Endothelial cell of umbilical vein (primary cell): ENCODE measurements at regions of chr21 and their contacts with region 1.

Region 1: GRCh38 chr21:16419188-16419921 is 689.6 kb downstream of the USP25 start:
- DNase-seq: peak; percentile 99
- H3K4me3 ChIP-seq: peak overlapping the region; percentile 34 to 100 (median 57)
- H3K27ac ChIP-seq: peak overlapping the region; percentile 85
- H3K4me1 ChIP-seq: peaks cover 26% of the 10 kb centered on the region
- H3K27me3 ChIP-seq: no peaks in the 10 kb centered on the region
- CTCF ChIP-seq: no peak
- POLR2A ChIP-seq: peak; percentile 76

Region 2: GRCh38 chr21:15735409-15735808 is 683.9 kb before region 1 on chr21:
- CTCF ChIA-PET with region 1: no interaction called
- POLR2A ChIA-PET with region 1: no interaction called
- dilution Hi-C with region 1: no loop called
- intact Hi-C with region 1: loop called (anchors 2 kb)
- DNase-seq: peak; percentile 60
- H3K4me3 ChIP-seq: peak overlapping the region in 1 of 3 experiments; percentile 32
- H3K27ac ChIP-seq: peak overlapping the region; percentile 42
- H3K4me1 ChIP-seq: peaks cover 54% of the 10 kb centered on the region
- H3K27me3 ChIP-seq: no peaks in the 10 kb centered on the region
- CTCF ChIP-seq: no peak
- POLR2A ChIP-seq: no peak

Region 3: DNA sequence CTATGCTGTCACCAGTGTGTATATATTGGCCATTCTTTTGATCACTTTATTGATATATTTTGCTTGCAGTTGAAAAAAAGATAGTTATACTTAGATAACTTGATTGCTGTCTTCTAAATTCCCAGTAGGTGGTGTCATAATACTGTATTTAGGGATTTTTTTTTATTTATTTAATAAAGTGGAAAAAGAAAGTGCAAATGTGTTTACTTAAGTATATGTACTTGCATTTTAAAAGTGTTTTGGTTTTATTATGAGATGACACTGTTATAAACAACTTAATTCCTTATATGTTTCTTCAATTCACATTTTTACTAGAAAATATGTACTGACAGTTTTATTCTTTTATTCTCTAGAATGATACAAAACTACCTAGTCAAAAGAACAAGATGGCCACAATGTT is 524.8 kb before region 1 on chr21:
- CTCF ChIA-PET with region 1: no interaction called
- POLR2A ChIA-PET with region 1: no interaction called
- dilution Hi-C with region 1: no loop called
- intact Hi-C with region 1: loop called (anchors 10 kb)
- DNase-seq: peak; percentile 36
- H3K4me3 ChIP-seq: no peak overlapping the region
- H3K27ac ChIP-seq: no peak overlapping the region
- H3K4me1 ChIP-seq: no peaks in the 10 kb centered on the region
- H3K27me3 ChIP-seq: no peaks in the 10 kb centered on the region
- CTCF ChIP-seq: peak in 1 of 2 donors; percentile 13
- POLR2A ChIP-seq: no peak

Region 4: GRCh38 chr21:16194095-16194787 is 225.1 kb before region 1 on chr21:
- CTCF ChIA-PET with region 1: interaction called, 6 read pairs
- POLR2A ChIA-PET with region 1: no interaction called
- dilution Hi-C with region 1: no loop called
- intact Hi-C with region 1: loop called (anchors 1 kb)
- DNase-seq: peak; percentile 91
- H3K4me3 ChIP-seq: peak overlapping the region; percentile 59 to 94 (median 63)
- H3K27ac ChIP-seq: peak overlapping the region; percentile 92
- H3K4me1 ChIP-seq: peaks cover 33% of the 10 kb centered on the region
- H3K27me3 ChIP-seq: no peaks in the 10 kb centered on the region
- CTCF ChIP-seq: peak; percentile 13 to 41
- POLR2A ChIP-seq: peak; percentile 54

Region 5: DNA sequence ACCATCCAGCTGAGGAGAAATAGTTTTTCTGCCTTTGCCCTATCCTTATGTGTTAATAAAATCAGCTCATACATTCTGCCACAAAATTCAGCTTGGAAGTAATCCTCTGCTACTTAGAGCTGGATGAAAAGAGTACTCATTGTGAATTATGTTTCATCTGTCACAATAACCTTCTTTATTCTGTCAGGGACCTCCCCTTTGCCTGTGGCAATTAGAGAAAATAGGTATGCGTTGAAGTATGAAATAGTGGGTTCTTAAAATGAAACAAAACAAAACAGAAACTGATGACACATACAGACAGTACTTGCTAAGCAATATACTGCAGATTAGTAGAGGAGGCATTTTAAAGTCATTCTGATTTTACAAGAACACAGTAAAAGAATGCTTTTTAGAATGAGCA is 111.1 kb before region 1 on chr21:
- CTCF ChIA-PET with region 1: no interaction called
- POLR2A ChIA-PET with region 1: no interaction called
- dilution Hi-C with region 1: no loop called
- intact Hi-C with region 1: loop called (anchors 2 kb)
- DNase-seq: peak; percentile 56
- H3K4me3 ChIP-seq: peak overlapping the region; percentile 13 to 54 (median 41)
- H3K27ac ChIP-seq: peak overlapping the region; percentile 35
- H3K4me1 ChIP-seq: peaks cover 40% of the 10 kb centered on the region
- H3K27me3 ChIP-seq: no peaks in the 10 kb centered on the region
- CTCF ChIP-seq: no peak
- POLR2A ChIP-seq: no peak

Region 6: GRCh38 chr21:16437586-16437985 is 18.2 kb after region 1 on chr21:
- CTCF ChIA-PET with region 1: interaction called, 3 read pairs
- POLR2A ChIA-PET with region 1: interaction called, 4 read pairs
- dilution Hi-C with region 1: no loop called
- intact Hi-C with region 1: loop called (anchors 1 kb)
- DNase-seq: peak; percentile 86
- H3K4me3 ChIP-seq: no peak overlapping the region
- H3K27ac ChIP-seq: no peak overlapping the region
- H3K4me1 ChIP-seq: peaks cover 22% of the 10 kb centered on the region
- H3K27me3 ChIP-seq: no peaks in the 10 kb centered on the region
- CTCF ChIP-seq: no peak
- POLR2A ChIP-seq: no peak